OCI-LY7 (cell line): ENCODE measurements at regions of chr11 and their contacts with region 1.

Region 1: DNA sequence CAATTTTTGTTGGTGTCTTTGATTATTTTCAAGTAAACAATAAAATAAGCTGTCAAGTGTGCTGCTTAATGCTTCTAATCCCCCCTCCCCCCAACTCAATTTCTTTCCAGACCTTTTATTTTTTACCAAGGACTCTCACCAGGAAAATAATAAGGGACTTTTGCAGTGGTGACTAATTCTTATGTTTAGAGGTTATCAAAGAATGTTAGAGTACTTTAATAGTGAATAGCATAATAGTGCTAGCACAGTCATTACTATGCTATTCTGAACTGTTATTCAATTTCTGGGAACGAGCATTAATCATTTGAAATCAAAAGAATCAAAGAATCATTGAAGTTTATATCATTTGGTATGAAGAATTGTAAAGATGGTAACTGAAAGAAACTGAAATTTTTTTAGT is 251.4 kb downstream of the DDX10 start:
- DNase-seq: no peak
- H3K4me3 ChIP-seq: no peak overlapping the region
- H3K27ac ChIP-seq: no peak overlapping the region
- H3K4me1 ChIP-seq: no peaks in the 10 kb centered on the region
- CTCF ChIP-seq: no peak

Region 2: DNA sequence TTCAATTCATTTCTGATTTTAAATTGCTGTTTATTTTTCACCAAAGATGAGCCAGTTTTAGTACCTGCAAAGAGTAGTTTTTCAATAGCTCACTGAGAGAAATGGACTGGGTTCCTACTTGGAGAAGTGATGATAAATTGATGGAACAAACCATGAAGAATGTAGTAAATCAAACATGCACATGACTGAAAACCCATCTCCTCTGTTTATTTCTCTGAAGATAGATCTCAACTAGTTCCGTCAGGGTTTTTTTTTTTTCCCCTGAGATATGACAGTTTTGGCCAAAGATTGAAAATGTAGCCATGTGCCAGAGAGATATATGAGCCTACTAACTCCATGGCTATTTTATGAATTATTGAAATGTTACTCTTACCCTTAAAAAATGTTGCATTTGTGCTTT is 11.8 kb before region 1 on chr11:
- CTCF ChIA-PET with region 1: interaction called, 3 read pairs
- POLR2A ChIA-PET with region 1: interaction called, 3 read pairs
- intact Hi-C with region 1: loop called (anchors 2 kb)
- DNase-seq: no peak
- H3K4me3 ChIP-seq: no peak overlapping the region
- H3K27ac ChIP-seq: no peak overlapping the region
- H3K4me1 ChIP-seq: no peaks in the 10 kb centered on the region
- CTCF ChIP-seq: no peak